CD8-positive, alpha-beta memory T cell (primary cell): ENCODE measurements at regions of chr12 and their contacts with region 1.

Region 1: GRCh38 chr12:12736759-12737676 is 19.9 kb downstream of the CDKN1B start:
- DNase-seq: peak; percentile 26 to 71 (median 56)
- H3K4me3 ChIP-seq: peak overlapping the region; percentile 51
- H3K4me3 Mint-ChIP-seq: peak overlapping the region; percentile 77 to 87 (median 85)
- H3K27ac ChIP-seq: peak overlapping the region; percentile 64
- H3K27ac Mint-ChIP-seq: peak overlapping the region; percentile 90 to 97 (median 94)
- H3K4me1 ChIP-seq: peaks cover 34% of the 10 kb centered on the region
- H3K4me1 Mint-ChIP-seq: peaks cover 35 to 54% (median 53%) of the 10 kb centered on the region in 3 donors
- H3K27me3 ChIP-seq: no peaks in the 10 kb centered on the region
- H3K27me3 Mint-ChIP-seq: no peaks in the 10 kb centered on the region

Region 2: GRCh38 chr12:12334367-12335040 is 402.5 kb before region 1 on chr12:
- CTCF ChIA-PET with region 1: interaction called, 13 read pairs
- POLR2A ChIA-PET with region 1: no interaction called
- DNase-seq: peak; percentile 50 to 69 (median 59)
- H3K4me3 ChIP-seq: no peak overlapping the region
- H3K4me3 Mint-ChIP-seq: peak overlapping the region in 2 of 7 donors; percentile 7 to 15
- H3K27ac ChIP-seq: no peak overlapping the region
- H3K27ac Mint-ChIP-seq: peak overlapping the region in 1 of 8 donors; percentile 29
- H3K4me1 ChIP-seq: peaks cover 6% of the 10 kb centered on the region
- H3K4me1 Mint-ChIP-seq: peaks cover 8 to 15% (median 14%) of the 10 kb centered on the region in 3 donors
- H3K27me3 ChIP-seq: no peaks in the 10 kb centered on the region
- H3K27me3 Mint-ChIP-seq: peaks cover 1 to 7% of the 10 kb centered on the region in 2 donors

Region 3: DNA sequence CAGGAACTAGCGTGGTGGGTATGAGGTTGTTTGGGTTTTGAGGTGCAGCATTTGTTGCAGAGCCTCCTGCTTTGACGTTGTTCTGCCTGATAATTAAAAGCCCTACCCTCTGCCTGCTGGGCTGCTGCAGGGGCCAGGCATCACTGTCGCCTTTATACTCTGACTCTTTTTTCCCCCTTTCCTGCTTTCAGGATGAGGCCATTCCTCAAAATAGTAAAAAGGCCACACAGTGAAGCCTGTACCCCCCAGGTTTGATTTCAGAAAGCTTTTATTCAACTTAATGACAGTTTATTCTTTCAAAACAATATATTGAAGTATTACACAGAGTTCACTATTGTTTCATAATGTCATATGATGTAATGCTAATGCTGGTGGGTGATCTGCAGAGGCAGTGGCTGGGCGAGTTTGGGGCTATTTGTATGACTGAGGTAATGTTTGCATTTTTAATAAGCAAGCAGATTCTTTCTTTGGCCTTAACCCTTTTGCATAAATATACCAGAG is 371.0 kb before region 1 on chr12:
- CTCF ChIA-PET with region 1: interaction called, 14 read pairs
- POLR2A ChIA-PET with region 1: no interaction called
- DNase-seq: no peak
- H3K4me3 ChIP-seq: no peak overlapping the region
- H3K4me3 Mint-ChIP-seq: peak overlapping the region in 5 of 7 donors; percentile 1 to 44 (median 30)
- H3K27ac ChIP-seq: no peak overlapping the region
- H3K27ac Mint-ChIP-seq: peak overlapping the region; percentile 55 to 93 (median 79)
- H3K4me1 ChIP-seq: peaks cover 24% of the 10 kb centered on the region
- H3K4me1 Mint-ChIP-seq: peaks cover 49 to 75% (median 63%) of the 10 kb centered on the region in 3 donors
- H3K27me3 ChIP-seq: no peaks in the 10 kb centered on the region
- H3K27me3 Mint-ChIP-seq: no peaks in the 10 kb centered on the region

Region 4: DNA sequence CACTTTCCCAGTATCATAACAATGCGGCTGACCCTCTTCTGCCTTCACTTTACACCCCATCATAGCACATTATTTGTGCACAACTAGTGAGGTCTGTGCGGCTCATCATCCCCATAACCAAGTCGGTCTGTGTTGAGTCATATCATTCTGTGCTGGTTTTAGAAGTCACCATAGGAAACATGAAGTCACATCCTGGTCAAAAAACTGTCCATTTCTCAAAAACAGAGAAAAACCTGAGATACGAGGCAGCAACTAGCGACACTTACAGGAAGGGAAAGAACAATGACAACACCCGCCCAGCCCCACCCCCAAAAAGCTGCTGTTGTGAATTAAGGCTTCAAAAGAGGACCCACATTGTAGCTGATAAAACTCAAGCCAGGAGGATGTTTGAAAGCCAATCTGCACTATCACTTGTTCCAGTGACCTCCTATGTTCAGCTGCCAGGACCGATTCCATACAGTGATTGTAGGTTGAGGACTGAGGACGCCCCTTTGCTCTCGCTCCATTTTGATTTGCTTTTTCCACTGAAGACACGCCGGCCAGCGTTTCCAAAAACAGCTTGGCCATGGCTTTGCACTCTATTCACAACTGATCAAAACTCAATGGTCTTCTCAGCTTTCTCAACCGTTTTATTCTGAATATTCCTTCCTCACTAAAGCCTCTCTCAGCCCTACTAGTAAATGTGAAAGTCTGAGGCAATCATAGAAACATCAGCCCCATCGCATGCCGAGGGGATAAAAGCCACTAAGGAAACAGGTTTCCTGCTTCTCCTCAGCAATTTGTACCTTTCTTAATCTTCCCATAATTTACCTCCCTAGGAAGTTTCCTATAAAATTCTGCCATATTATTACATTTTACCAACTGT is 261.9 kb before region 1 on chr12:
- CTCF ChIA-PET with region 1: interaction called, 12 read pairs
- POLR2A ChIA-PET with region 1: no interaction called
- DNase-seq: peak in 4 of 5 donors; percentile 30 to 74 (median 54)
- H3K4me3 ChIP-seq: peak overlapping the region; percentile 5
- H3K4me3 Mint-ChIP-seq: peak overlapping the region; percentile 23 to 82 (median 75)
- H3K27ac ChIP-seq: peak overlapping the region; percentile 71
- H3K27ac Mint-ChIP-seq: peak overlapping the region; percentile 88 to 99 (median 95)
- H3K4me1 ChIP-seq: peaks cover 23% of the 10 kb centered on the region
- H3K4me1 Mint-ChIP-seq: peaks cover 42 to 75% (median 61%) of the 10 kb centered on the region in 3 donors
- H3K27me3 ChIP-seq: no peaks in the 10 kb centered on the region
- H3K27me3 Mint-ChIP-seq: no peaks in the 10 kb centered on the region

Region 5: GRCh38 chr12:12654691-12655460 is 82.1 kb before region 1 on chr12:
- CTCF ChIA-PET with region 1: interaction called, 29 read pairs
- POLR2A ChIA-PET with region 1: interaction called, 3 read pairs
- DNase-seq: no peak
- H3K4me3 ChIP-seq: no peak overlapping the region
- H3K4me3 Mint-ChIP-seq: no peak overlapping the region
- H3K27ac ChIP-seq: no peak overlapping the region
- H3K27ac Mint-ChIP-seq: peak overlapping the region in 1 of 8 donors; percentile 19
- H3K4me1 ChIP-seq: peaks cover 4% of the 10 kb centered on the region
- H3K4me1 Mint-ChIP-seq: peaks cover 9 to 20% (median 19%) of the 10 kb centered on the region in 3 donors
- H3K27me3 ChIP-seq: no peaks in the 10 kb centered on the region
- H3K27me3 Mint-ChIP-seq: no peaks in the 10 kb centered on the region

Region 6: GRCh38 chr12:12716793-12717585 is 20.0 kb before region 1 on chr12 and contains the start of gene CDKN1B:
- CTCF ChIA-PET with region 1: interaction called, 56 read pairs
- POLR2A ChIA-PET with region 1: interaction called, 127 read pairs
- DNase-seq: peak; percentile 82 to 92 (median 87)
- H3K4me3 ChIP-seq: peak within 1 kb of the TSS; percentile 96
- H3K4me3 Mint-ChIP-seq: peak within 1 kb of the TSS; percentile 92 to 99 (median 99)
- H3K27ac ChIP-seq: peak within 1 kb of the TSS; percentile 98
- H3K27ac Mint-ChIP-seq: peak within 1 kb of the TSS; percentile 96 to 100 (median 98)
- H3K4me1 ChIP-seq: peaks cover 37% of the 10 kb centered on the region
- H3K4me1 Mint-ChIP-seq: peaks cover 52 to 68% (median 62%) of the 10 kb centered on the region in 3 donors
- H3K27me3 ChIP-seq: no peaks in the 10 kb centered on the region
- H3K27me3 Mint-ChIP-seq: peaks cover 0 to 2% of the 10 kb centered on the region in 2 donors
- total RNA-seq, gene CDKN1B: 47.1 to 48.7 TPM